ENCODE measurements at regions of chr1 and their contacts with region 1.

Region 1: GRCh38 chr1:30977105-30977504 is 68.5 kb upstream of the SDC3 start:
- DNase-seq: no peak
- H3K4me3 ChIP-seq: no peak overlapping the region
- H3K27ac ChIP-seq: no peak overlapping the region
- H3K4me1 ChIP-seq: no peaks in the 10 kb centered on the region
- H3K27me3 ChIP-seq: no peaks in the 10 kb centered on the region
- CTCF ChIP-seq: no peak
- POLR2A ChIP-seq: no peak

Region 2: DNA sequence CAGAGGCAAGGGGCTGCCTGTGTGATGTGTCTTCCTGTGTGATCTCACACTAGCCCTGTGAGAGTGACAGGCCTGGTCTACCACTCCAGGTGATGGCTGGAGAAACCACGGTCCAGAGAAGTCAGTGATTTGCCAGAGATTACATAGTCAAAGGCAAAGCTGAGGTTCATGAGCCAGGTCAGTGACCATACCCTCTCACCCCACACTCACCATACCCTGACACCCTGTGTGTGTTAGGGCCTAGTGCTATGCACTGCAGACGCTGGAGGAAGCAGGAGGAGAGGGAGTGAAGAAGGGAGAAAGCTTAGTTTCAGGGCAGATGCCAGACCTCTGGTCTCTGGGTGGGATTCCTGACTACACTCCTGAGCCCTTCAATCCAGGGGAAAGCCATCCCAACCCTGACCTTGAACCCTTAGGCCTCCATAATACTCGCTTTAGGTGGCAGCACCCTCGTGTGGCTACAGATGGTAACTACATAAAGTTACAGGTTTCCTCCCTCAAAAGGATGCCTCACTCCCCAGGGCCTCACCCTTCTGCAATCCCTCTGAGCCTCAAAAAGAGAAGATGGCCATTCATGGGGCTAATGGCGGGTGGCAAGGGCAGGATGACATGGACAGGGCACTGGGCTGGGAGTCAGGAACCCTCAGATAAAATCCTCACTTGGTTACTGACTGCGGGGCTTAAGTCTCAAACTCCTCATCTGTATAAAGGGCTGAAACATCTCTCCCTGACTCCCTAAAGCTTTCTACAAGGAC is 47.8 kb before region 1 on chr1:
- intact Hi-C with region 1: loop called (anchors 5 kb)
- DNase-seq: no peak
- H3K4me3 ChIP-seq: no peak overlapping the region
- H3K27ac ChIP-seq: peak overlapping the region; percentile 16 to 48
- H3K4me1 ChIP-seq: no peaks in the 10 kb centered on the region
- H3K27me3 ChIP-seq: no peaks in the 10 kb centered on the region
- CTCF ChIP-seq: peak; percentile 42 to 69 (median 58)
- POLR2A ChIP-seq: no peak

Region 3: DNA sequence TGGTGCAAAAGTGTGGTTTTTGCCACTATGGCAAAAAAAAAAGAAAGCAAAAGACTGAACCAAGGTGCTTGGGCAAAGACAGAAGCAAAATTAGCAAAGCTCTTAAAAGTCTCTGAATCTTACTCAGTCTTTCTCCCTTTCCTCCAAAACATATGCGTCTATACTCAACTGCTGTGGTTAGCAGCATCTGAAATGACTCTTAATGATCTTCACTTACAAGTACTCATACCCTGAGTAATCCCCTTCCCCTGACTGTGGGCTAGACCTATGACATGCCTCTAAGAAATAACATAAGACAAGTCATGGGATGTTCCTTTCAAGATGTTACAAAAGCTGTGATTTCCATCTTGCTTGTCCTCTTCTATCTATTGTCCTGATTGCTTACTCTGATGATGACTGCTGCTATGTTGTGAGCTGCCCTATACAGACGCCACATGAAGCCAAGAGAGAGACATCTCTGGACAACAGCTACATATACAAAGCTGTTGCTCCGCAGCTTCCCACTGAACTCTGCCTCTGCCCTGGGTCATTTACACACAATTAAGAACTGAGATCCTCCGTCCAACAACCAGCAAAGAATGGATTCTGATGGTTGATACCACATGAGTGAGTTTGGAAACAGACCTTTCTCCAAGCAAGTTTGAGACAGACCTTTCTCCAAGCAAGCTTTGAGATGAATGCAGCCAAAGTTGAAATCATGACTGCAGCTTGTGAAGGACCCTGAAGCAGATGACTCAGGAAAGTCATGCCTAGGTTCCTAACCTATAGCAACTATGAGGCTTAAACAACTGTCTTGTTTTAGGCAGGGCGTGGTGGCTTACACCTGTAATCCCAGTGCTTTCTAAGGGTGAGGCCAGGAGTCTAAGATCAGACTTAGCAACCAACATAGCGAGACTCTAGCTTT is 33.2 kb after region 1 on chr1:
- intact Hi-C with region 1: loop called (anchors 5 kb)
- DNase-seq: no peak
- H3K4me3 ChIP-seq: no peak overlapping the region
- H3K27ac ChIP-seq: no peak overlapping the region
- H3K4me1 ChIP-seq: peaks cover 14% of the 10 kb centered on the region
- H3K27me3 ChIP-seq: no peaks in the 10 kb centered on the region
- CTCF ChIP-seq: no peak
- POLR2A ChIP-seq: no peak

Region 4: GRCh38 chr1:31264790-31265386 is 287.8 kb after region 1 on chr1:
- intact Hi-C with region 1: no loop called
- DNase-seq: no peak
- H3K4me3 ChIP-seq: no peak overlapping the region
- H3K27ac ChIP-seq: no peak overlapping the region
- H3K4me1 ChIP-seq: peaks cover 7% of the 10 kb centered on the region
- H3K27me3 ChIP-seq: no peaks in the 10 kb centered on the region
- CTCF ChIP-seq: no peak
- POLR2A ChIP-seq: no peak

Measured in prostate gland (tissue), 2 donors.